ENCODE measurements at regions of chr2 and their contacts with region 1.

Region 1: DNA sequence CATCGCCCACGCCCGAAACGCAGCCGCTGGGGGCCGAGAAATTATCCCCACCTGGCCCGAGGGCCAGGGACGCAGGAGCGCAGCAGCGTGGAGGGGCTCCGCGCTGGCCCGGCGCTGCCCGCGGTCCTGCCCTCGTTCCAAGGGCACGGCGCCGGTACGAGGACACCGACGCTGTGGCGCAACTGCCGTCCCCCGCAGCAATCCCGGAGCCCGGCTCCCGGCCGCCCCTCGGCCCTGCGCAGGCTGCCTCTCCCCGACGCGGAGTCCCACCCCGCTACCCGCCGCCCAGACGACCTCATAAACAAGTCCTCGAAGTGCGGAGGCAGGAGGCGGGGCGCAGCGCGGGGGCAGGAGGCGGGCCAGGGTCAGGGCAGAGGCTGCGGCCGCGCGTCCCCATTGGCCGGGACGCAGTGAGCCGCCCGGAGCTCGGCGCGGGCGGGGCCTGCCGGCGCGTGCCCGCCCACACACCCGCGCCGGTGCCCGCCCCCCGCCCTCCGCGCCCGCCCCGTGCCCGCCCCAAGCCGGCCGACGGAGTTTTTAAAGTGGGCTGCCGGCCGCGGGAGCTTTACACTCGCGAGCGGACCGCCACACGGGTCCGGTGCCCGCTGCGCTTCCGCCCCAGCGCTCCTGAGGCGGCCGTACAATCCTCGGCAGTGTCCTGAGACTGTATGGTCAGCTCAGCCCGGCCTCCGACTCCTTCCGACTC is at the start of gene EPAS1:
- DNase-seq: peak; percentile 83 to 95
- H3K4me3 ChIP-seq: peak within 1 kb of the TSS; percentile 80
- H3K27ac ChIP-seq: peak within 1 kb of the TSS; percentile 87
- H3K4me1 ChIP-seq: peaks cover 36% of the 10 kb centered on the region
- H3K27me3 ChIP-seq: no peaks in the 10 kb centered on the region
- CTCF ChIP-seq: no peak
- total RNA-seq, gene EPAS1: 127 and 163 TPM in 2 replicates

Region 2: DNA sequence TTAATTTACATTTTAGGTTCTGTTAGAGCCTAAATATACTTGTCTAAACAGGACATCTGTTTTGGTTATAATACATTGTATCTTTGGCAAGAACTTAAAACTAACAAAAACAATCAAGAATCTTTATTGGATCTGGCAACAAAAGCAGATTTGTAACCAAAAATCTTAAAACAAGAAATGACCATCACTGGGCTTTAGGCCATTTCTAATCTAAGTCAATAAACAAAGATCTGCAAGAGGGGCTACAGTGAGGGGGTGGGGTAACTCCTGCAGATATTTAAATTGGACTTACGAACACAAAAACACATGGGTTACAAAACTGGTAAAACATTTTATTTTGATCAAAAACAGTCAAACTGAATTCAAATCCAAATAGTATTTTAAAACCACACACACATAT is 763.2 kb before region 1 on chr2:
- CTCF ChIA-PET with region 1: no interaction called
- POLR2A ChIA-PET with region 1: no interaction called
- intact Hi-C with region 1: no loop called
- DNase-seq: no peak
- H3K4me3 ChIP-seq: no peak overlapping the region
- H3K27ac ChIP-seq: no peak overlapping the region
- H3K4me1 ChIP-seq: no peaks in the 10 kb centered on the region
- H3K27me3 ChIP-seq: no peaks in the 10 kb centered on the region
- CTCF ChIP-seq: no peak

Region 3: GRCh38 chr2:45993476-45993991 is 303.5 kb before region 1 on chr2:
- CTCF ChIA-PET with region 1: interaction called, 24 read pairs
- POLR2A ChIA-PET with region 1: no interaction called
- intact Hi-C with region 1: loop called (anchors 5 kb)
- DNase-seq: peak; percentile 59 to 74
- H3K4me3 ChIP-seq: no peak overlapping the region
- H3K27ac ChIP-seq: peak overlapping the region; percentile 88
- H3K4me1 ChIP-seq: peaks cover 36% of the 10 kb centered on the region
- H3K27me3 ChIP-seq: no peaks in the 10 kb centered on the region
- CTCF ChIP-seq: peak; percentile 95

Region 4: GRCh38 chr2:46062637-46063412 is 234.2 kb before region 1 on chr2:
- CTCF ChIA-PET with region 1: interaction called, 5 read pairs
- POLR2A ChIA-PET with region 1: interaction called, 3 read pairs
- intact Hi-C with region 1: loop called (anchors 1 kb)
- DNase-seq: peak; percentile 65 to 76
- H3K4me3 ChIP-seq: no peak overlapping the region
- H3K27ac ChIP-seq: no peak overlapping the region
- H3K4me1 ChIP-seq: peaks cover 40% of the 10 kb centered on the region
- H3K27me3 ChIP-seq: no peaks in the 10 kb centered on the region
- CTCF ChIP-seq: peak; percentile 99

Region 5: DNA sequence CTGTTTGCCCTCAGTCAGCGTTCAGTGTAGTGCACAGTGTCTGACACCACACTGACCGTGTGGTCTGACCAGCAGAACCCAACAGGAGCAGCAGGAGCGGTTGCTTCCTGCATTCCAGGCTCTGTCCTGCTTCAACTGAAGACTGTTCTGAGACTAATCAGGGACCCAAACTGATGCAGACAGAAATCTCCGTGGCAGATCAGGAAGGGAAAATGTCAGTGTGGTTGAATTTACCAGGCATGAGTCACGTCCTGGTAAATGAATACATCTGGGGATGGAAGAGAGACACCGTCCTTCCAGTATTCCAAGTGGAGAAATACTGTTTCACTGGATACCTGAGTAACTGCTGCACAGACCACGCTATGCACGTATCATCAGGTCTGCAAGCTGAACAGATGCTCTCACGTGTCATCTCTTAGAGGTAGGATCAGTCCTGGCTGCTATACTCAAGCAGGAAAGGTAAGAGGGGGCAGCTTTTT is 223.4 kb before region 1 on chr2:
- CTCF ChIA-PET with region 1: no interaction called
- POLR2A ChIA-PET with region 1: no interaction called
- intact Hi-C with region 1: loop called (anchors 1 kb)
- DNase-seq: peak; percentile 79 to 99
- H3K4me3 ChIP-seq: peak overlapping the region; percentile 30; the same call in 1 of the 2 replicates
- H3K27ac ChIP-seq: peak overlapping the region; percentile 90
- H3K4me1 ChIP-seq: peaks cover 54% of the 10 kb centered on the region
- H3K27me3 ChIP-seq: no peaks in the 10 kb centered on the region
- CTCF ChIP-seq: no peak

Region 6: DNA sequence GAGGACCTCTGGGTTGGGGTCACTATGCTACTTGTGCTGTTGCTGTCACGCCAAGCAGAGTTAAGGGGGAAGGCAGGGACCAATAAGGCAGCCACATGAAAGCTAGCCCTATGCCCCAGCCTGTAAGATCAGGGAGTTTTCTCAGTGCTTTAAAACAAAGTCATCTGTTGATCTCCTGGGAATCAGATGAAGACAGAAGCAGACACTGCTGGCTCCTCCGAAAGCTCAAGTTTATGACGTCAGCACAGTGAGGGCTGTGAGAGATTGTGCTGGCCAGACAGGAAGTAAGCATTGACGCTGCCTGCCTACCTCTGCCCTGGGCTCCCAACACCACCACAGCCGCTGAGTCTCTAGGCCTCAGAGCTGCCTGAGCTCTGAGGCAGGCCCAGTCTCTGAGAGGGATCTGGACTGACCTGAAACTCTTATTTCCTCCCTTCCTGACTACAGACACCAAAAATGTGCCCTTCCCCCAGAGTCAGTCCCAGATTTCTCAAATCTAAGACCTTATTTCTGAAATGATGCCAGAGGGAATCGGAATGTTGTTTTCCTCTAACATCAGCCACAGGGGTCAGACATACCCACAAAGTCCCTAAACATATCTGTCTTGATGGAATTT is 117.8 kb before region 1 on chr2:
- CTCF ChIA-PET with region 1: no interaction called
- POLR2A ChIA-PET with region 1: interaction called, 5 read pairs
- intact Hi-C with region 1: loop called (anchors 1 kb)
- DNase-seq: peak; percentile 82 to 99
- H3K4me3 ChIP-seq: no peak overlapping the region; the same call in 1 of the 2 replicates
- H3K27ac ChIP-seq: peak overlapping the region; percentile 94
- H3K4me1 ChIP-seq: peaks cover 58% of the 10 kb centered on the region
- H3K27me3 ChIP-seq: no peaks in the 10 kb centered on the region
- CTCF ChIP-seq: no peak; the same call in 1 of the 2 replicates

Region 7: DNA sequence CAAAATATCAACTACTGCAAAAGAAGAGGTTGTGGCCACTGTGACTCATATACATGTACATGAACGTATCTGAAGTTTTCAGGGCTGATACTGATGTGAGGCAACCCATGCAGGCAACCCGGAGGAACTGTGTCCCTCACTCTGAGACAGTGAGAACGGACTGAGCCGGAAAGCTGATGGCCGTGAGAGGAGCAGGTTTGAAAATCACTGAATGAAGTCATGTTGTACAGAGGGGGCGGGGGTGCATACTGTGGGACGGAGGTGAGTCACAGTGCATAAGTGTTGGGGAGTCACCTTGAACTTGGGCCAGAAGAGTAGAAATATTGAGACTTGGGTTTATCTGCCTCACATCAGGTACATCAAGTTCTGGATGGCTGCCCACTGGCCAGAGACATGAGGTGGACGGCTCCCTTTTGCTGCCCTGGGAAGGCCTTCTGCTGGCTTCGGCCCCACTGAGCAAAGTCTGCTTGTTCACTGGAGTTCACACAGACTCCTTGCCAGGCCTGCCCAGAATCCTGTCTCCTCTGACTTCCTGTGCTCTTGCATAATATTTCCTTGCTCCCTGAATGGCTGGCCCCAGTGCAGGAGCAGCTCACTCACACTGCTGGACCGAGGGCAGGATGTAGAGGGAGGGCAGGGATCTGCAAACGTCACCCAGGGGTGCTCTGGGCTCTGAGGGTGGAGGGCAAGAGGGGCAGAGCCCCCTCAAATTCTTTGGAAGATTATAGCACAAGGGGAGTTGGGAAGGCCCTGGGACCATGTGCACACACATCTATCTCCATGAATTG is 18.3 kb after region 1 on chr2:
- CTCF ChIA-PET with region 1: no interaction called
- POLR2A ChIA-PET with region 1: no interaction called
- intact Hi-C with region 1: loop called (anchors 1 kb)
- DNase-seq: peak; percentile 93 to 98
- H3K4me3 ChIP-seq: peak overlapping the region; percentile 22; the same call in 1 of the 2 replicates
- H3K27ac ChIP-seq: peak overlapping the region; percentile 76
- H3K4me1 ChIP-seq: peaks cover 93% of the 10 kb centered on the region
- H3K27me3 ChIP-seq: no peaks in the 10 kb centered on the region
- CTCF ChIP-seq: no peak

Region 8: DNA sequence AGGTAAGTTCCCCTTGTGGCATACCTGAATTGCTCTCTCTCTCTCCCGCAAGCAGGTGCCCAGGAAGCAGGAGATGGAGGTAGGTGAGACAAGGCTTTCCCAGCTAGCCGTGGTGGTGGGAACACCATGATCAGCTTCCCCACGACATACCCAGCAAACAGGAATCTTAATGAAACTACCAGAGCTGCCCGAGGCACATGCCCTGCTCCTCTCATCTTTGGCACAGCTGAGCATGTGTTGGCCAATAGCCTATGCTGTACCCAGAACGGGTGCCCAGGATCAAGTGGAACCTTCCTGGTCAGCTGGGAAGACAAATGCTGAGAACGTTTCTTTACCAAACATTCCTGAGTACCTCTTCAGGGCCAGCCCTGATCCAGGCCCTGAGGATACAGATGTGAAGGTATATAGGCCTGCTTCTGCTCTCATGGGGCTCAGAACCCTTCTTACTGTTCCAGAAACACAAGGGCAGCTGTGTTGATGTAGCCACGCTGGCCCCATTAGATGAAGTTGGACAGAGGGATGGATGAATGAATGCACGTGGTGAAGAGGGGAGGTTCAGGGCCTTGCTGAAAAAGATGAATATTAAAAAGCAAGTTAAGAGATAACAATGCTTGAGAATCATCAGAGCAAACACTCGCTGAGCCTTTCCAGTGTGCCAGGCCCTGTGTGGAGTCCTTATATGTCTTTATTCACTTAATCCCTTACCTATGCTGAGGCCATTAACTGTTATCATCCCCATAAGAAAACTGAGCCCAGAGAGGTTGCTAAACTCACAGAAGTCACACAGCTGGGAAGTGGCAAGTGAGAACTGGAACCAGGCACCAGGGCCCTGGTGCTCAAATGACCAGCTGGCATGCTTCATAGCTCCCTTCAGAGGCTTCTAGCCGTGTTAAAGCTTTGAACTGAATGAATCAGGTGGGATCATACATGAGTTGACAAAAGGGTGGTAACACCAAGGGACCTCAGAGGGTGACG is 113.6 kb after region 1 on chr2:
- CTCF ChIA-PET with region 1: interaction called, 6 read pairs
- POLR2A ChIA-PET with region 1: no interaction called
- intact Hi-C with region 1: loop called (anchors 1 kb)
- DNase-seq: peak in 1 of 2 experiments; percentile 73
- H3K4me3 ChIP-seq: peak overlapping the region; percentile 28; the same call in 1 of the 2 replicates
- H3K27ac ChIP-seq: peak overlapping the region; percentile 98
- H3K4me1 ChIP-seq: peaks cover 88% of the 10 kb centered on the region
- H3K27me3 ChIP-seq: no peaks in the 10 kb centered on the region
- CTCF ChIP-seq: no peak